Stomach (tissue), 19 donors: ENCODE measurements at regions of chr1 and their contacts with region 1.

Region 1: GRCh38 chr1:7646981-7647901 is 123.9 kb upstream of the VAMP3 start:
- DNase-seq: peak; percentile 83 to 85
- H3K4me3 ChIP-seq: no peak overlapping the region
- H3K27ac ChIP-seq: no peak overlapping the region
- H3K4me1 ChIP-seq: peaks cover 11 to 53% (median 31%) of the 10 kb centered on the region in 4 donors
- H3K27me3 ChIP-seq: peaks cover 0 to 8% (median 0%) of the 10 kb centered on the region in 3 donors
- CTCF ChIP-seq: peak in 5 of 7 experiments; percentile 69 to 97 (median 92)
- EP300 ChIP-seq: no peak
- POLR2A ChIP-seq: no peak

Region 2: DNA sequence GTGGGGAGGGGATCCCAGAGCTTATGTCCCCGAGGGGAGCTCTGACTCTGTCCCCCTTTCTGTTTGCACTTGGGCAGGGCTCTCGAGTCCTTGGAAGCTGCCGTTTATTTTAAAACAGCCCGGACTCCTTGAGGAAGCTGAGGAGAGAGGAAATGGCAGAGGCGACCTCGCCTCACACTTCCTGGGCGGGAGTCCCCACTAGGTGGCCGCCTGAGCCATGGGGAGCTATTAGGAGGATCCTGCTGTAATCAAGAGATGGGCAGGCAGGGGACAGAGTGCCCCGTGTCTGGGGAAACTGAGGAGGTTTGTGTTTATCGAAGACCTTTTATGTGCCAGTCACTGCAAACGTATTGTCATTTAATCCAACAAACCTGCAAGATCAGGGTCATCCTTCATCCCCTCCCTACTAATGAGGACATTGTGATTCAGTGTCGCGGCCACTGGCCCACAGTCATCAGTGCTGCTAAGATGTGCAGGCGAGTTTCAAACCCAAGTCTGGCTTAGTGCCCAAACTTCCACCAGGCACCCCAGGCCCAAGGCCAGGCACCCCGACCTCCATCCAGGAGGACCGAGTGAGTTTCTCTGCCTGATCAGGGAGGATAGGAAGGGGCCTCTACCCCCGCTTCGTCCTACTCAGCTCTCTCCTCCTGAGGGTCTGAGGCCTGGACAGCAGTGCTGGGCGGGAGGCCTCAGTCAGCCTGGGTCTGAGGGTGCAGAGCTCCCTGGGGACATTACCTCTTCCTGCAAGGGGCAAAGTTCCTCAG is 193.0 kb before region 1 on chr1:
- intact Hi-C with region 1: loop called (anchors 5 kb)
- DNase-seq: peak; percentile 47 to 49
- H3K4me3 ChIP-seq: no peak overlapping the region
- H3K27ac ChIP-seq: no peak overlapping the region
- H3K4me1 ChIP-seq: peaks cover 0 to 27% (median 9%) of the 10 kb centered on the region in 4 donors
- H3K27me3 ChIP-seq: no peaks in the 10 kb centered on the region
- CTCF ChIP-seq: peak in 4 of 7 experiments; percentile 11 to 40 (median 30)
- EP300 ChIP-seq: no peak
- POLR2A ChIP-seq: no peak

Region 3: DNA sequence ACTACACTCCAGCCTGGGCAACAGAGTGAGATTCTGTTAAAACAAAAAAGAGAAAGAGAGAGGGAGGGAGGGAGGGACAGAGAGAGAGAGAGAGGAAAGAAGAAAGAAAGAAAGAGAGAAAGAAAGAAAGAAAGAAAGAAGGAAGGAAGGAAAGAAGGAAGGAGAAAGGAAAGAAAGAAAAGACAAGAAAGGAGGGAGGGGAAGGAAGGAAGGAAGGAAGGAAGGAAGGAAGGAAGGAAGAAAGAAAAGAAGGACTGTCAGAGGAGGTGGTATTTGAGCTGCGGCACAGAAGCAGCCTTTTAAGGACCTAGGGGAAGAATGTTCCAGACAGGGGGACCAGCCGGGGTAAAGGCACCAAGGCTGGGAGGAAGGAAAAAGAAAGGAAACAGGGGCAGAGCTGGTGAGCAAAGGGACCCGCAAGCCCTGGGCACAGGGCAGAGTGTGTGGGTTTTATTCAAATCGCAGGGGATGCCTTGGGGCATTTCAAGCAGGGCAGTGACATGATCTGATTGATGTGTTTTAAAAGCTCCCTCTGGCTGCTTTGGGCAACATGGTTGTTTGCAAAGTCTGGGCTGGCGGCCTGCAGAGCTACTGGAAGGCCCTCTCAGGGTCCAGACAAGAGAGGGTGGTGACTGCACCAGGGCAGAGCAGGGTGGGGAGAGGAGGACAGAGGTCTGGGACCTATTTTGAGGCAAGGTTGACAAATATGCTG is 53.1 kb before region 1 on chr1:
- intact Hi-C with region 1: no loop called
- DNase-seq: no peak
- H3K4me3 ChIP-seq: no peak overlapping the region
- H3K27ac ChIP-seq: no peak overlapping the region
- H3K4me1 ChIP-seq: peaks cover 0 to 11% (median 7%) of the 10 kb centered on the region in 4 donors
- H3K27me3 ChIP-seq: no peaks in the 10 kb centered on the region
- CTCF ChIP-seq: no peak
- EP300 ChIP-seq: no peak
- POLR2A ChIP-seq: no peak

Region 4: GRCh38 chr1:7810395-7810794 is 163.2 kb after region 1 on chr1:
- intact Hi-C with region 1: no loop called
- DNase-seq: no peak
- H3K4me3 ChIP-seq: no peak overlapping the region
- H3K27ac ChIP-seq: no peak overlapping the region
- H3K4me1 ChIP-seq: no peaks in the 10 kb centered on the region
- H3K27me3 ChIP-seq: no peaks in the 10 kb centered on the region
- CTCF ChIP-seq: no peak
- EP300 ChIP-seq: no peak
- POLR2A ChIP-seq: no peak